ENCODE measurements at regions of chr10 and their contacts with region 1.

Region 1: GRCh38 chr10:63720072-63720537 is 198.9 kb downstream of the REEP3 start:
- H3K4me3 Mint-ChIP-seq: no peak overlapping the region
- H3K27ac Mint-ChIP-seq: no peak overlapping the region
- H3K4me1 Mint-ChIP-seq: peaks cover 21% of the 10 kb centered on the region
- H3K27me3 Mint-ChIP-seq: peaks cover 9% of the 10 kb centered on the region

Region 2: GRCh38 chr10:63166742-63167258 is 553.3 kb before region 1 on chr10:
- intact Hi-C with region 1: loop called (anchors 1 kb)
- H3K4me3 Mint-ChIP-seq: no peak overlapping the region
- H3K27ac Mint-ChIP-seq: no peak overlapping the region
- H3K4me1 Mint-ChIP-seq: peaks cover 5% of the 10 kb centered on the region
- H3K27me3 Mint-ChIP-seq: no peaks in the 10 kb centered on the region

Region 3: GRCh38 chr10:63217120-63217605 is 502.9 kb before region 1 on chr10:
- intact Hi-C with region 1: loop called (anchors 5 kb)
- H3K4me3 Mint-ChIP-seq: no peak overlapping the region
- H3K27ac Mint-ChIP-seq: no peak overlapping the region
- H3K4me1 Mint-ChIP-seq: peaks cover 47% of the 10 kb centered on the region
- H3K27me3 Mint-ChIP-seq: no peaks in the 10 kb centered on the region